ENCODE measurements at regions of chr4 and their contacts with region 1.

Region 1: GRCh38 chr4:184745831-184746795 is 12.2 kb upstream of the CENPU start:
- DNase-seq: peak; percentile 80
- ATAC-seq: peak; percentile 80
- H3K4me3 Mint-ChIP-seq: no peak overlapping the region
- H3K27ac Mint-ChIP-seq: no peak overlapping the region
- H3K4me1 Mint-ChIP-seq: peaks cover 5% of the 10 kb centered on the region
- H3K27me3 Mint-ChIP-seq: no peaks in the 10 kb centered on the region

Region 2: DNA sequence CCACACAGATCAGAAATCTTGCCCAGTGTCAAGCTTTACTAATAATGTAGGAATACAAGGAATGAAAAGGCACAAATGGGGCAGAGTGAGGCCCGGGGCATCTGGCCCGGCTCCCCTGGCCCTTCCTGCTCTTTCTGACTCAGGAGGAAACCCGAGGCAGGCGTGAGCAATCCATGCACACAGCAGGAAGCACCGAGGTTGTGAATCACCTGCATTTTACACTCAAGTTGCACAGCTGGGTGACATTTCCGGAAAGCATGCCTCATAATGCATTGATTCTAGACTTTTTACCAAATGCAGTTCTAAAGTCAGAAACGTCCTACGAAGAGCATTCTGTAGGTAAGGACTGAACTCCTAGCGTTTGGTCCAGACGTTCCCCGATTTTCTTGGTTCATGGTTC is 57.7 kb before region 1 on chr4:
- CTCF ChIA-PET with region 1: no interaction called
- DNase-seq: no peak
- ATAC-seq: no peak
- H3K4me3 Mint-ChIP-seq: no peak overlapping the region
- H3K27ac Mint-ChIP-seq: no peak overlapping the region
- H3K4me1 Mint-ChIP-seq: peaks cover 18% of the 10 kb centered on the region
- H3K27me3 Mint-ChIP-seq: no peaks in the 10 kb centered on the region

Region 3: GRCh38 chr4:184733654-184734524 is 12.2 kb before region 1 on chr4 and contains the start of gene CENPU:
- CTCF ChIA-PET with region 1: interaction called, 24 read pairs
- DNase-seq: peak; percentile 97
- ATAC-seq: peak; percentile 94
- H3K4me3 Mint-ChIP-seq: peak within 1 kb of the TSS; percentile 95
- H3K27ac Mint-ChIP-seq: peak within 1 kb of the TSS; percentile 92
- H3K4me1 Mint-ChIP-seq: peaks cover 43% of the 10 kb centered on the region
- H3K27me3 Mint-ChIP-seq: no peaks in the 10 kb centered on the region
- total RNA-seq, gene CENPU: 71.9 to 74.7 TPM

Region 4: GRCh38 chr4:184819786-184820185 is 73.7 kb after region 1 on chr4:
- CTCF ChIA-PET with region 1: interaction called, 10 read pairs
- DNase-seq: no peak
- ATAC-seq: no peak
- H3K4me3 Mint-ChIP-seq: no peak overlapping the region
- H3K27ac Mint-ChIP-seq: no peak overlapping the region
- H3K4me1 Mint-ChIP-seq: peaks cover 45% of the 10 kb centered on the region
- H3K27me3 Mint-ChIP-seq: no peaks in the 10 kb centered on the region

Region 5: GRCh38 chr4:184983672-184984356 is 237.7 kb after region 1 on chr4:
- CTCF ChIA-PET with region 1: interaction called, 11 read pairs
- DNase-seq: peak; percentile 70
- ATAC-seq: peak; percentile 61
- H3K4me3 Mint-ChIP-seq: no peak overlapping the region
- H3K27ac Mint-ChIP-seq: no peak overlapping the region
- H3K4me1 Mint-ChIP-seq: no peaks in the 10 kb centered on the region
- H3K27me3 Mint-ChIP-seq: peaks cover 11% of the 10 kb centered on the region

Measured in activated CD8-positive, alpha-beta memory T cell treated with anti-CD3 and anti-CD28 coated beads, Interleukin-2, amount 10 ng/mL, durations not matched to agents 7 days and 5 days (primary cell).